ENCODE measurements at regions of chr12 and their contacts with region 1.

Region 1: DNA sequence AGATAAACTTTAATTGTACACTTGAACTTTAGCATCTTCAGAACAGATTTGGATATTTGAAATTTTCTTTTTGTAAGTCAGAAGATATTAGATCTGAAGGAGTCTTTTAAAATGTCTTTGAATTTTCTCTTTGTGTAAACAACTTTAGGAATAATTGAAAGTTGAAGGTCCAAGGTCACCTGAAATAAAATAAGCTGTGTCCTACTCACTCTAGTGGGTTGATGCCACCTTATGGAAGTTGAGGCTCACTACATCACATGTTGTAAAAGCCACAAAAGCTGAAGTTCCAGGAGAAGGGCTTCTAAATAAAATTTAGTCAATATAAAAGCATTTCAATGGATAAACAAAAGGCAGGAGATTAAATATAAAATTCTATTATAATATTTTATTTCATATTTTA is 122.0 kb upstream of the ATXN7L3B start:
- DNase-seq: peak; percentile 61
- ATAC-seq: no peak
- H3K4me3 ChIP-seq: no peak overlapping the region
- H3K27ac ChIP-seq: no peak overlapping the region
- H3K4me1 ChIP-seq: 0 out of 2 replicates have a peak, but pooled peaks cover 5% of the 10 kb centered on the region
- H3K27me3 ChIP-seq: no peaks in the 10 kb centered on the region
- CTCF ChIP-seq: peak; percentile 73

Region 2: GRCh38 chr12:74021937-74022336 is 393.7 kb before region 1 on chr12:
- CTCF ChIA-PET with region 1: no interaction called
- POLR2A ChIA-PET with region 1: no interaction called
- intact Hi-C with region 1: loop called (anchors 1 kb)
- DNase-seq: peak; percentile 84
- ATAC-seq: peak; percentile 100
- H3K4me3 ChIP-seq: no peak overlapping the region
- H3K27ac ChIP-seq: no peak overlapping the region
- H3K4me1 ChIP-seq: no peaks in the 10 kb centered on the region
- H3K27me3 ChIP-seq: no peaks in the 10 kb centered on the region
- CTCF ChIP-seq: peak; percentile 92

Region 3: DNA sequence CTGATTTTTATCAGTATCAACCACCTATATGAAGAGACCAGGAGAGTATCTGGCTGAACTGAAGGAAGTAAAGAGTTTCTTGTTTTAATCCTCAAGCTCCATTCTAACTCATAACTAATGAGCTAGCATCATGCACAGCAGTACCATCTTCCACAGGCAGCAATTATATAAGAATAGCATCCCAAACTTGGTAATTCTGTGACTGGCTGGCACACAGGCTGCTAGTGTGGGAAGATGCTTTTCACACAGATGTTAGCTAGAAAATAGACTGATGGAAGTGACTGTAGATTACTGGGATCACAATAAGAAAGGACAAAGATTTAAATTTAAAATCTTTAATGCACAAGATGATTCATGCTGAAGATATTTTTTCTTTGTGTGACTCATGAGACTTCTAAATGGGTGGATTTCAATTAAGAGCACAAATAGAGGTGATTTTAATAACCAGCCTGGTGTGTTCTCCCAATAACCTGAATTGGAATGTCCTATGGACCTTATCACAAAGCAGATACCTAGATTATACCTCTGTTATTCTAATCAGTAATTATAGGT is 295.7 kb before region 1 on chr12:
- CTCF ChIA-PET with region 1: no interaction called
- POLR2A ChIA-PET with region 1: no interaction called
- intact Hi-C with region 1: no loop called
- DNase-seq: peak; percentile 58
- ATAC-seq: peak; percentile 75
- H3K4me3 ChIP-seq: no peak overlapping the region
- H3K27ac ChIP-seq: no peak overlapping the region
- H3K4me1 ChIP-seq: peaks cover 11% of the 10 kb centered on the region; the same call in 1 of the 2 replicates
- H3K27me3 ChIP-seq: no peaks in the 10 kb centered on the region
- CTCF ChIP-seq: no peak

Region 4: DNA sequence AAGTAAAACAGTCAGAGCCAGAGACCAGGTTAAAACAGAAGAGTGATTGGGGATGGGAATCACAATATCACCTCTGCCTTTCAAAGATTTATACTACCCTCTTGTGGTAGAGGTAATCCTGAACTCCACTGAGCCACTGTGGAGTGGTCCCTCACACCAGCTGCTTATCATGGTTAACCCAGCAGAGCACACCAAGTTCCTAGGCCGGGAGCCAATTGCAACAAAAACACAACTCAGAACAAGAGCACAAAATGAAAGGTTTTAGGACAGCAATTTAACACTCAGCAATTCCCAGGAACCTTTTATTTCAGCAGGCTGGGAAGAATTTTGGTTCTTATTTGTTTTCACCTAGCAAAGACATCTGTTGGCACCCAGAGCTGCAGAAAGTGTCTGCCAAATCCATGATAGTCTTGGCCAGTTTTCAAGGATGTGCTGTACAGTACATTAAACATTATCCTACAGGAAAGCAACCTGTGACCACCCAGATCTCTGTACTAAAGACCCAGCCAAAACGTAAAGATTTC is 98.5 kb before region 1 on chr12:
- CTCF ChIA-PET with region 1: interaction called, 4 read pairs
- POLR2A ChIA-PET with region 1: no interaction called
- intact Hi-C with region 1: loop called (anchors 1 kb)
- DNase-seq: peak; percentile 72
- ATAC-seq: peak; percentile 98
- H3K4me3 ChIP-seq: no peak overlapping the region
- H3K27ac ChIP-seq: no peak overlapping the region
- H3K4me1 ChIP-seq: peaks cover 6% of the 10 kb centered on the region; the same call in 1 of the 2 replicates
- H3K27me3 ChIP-seq: no peaks in the 10 kb centered on the region
- CTCF ChIP-seq: peak; percentile 81

Region 5: GRCh38 chr12:74537707-74538385 is 122.2 kb after region 1 on chr12 and contains the start of gene ATXN7L3B:
- CTCF ChIA-PET with region 1: no interaction called
- POLR2A ChIA-PET with region 1: no interaction called
- intact Hi-C with region 1: loop called (anchors 1 kb)
- DNase-seq: peak; percentile 97
- ATAC-seq: peak; percentile 94
- H3K4me3 ChIP-seq: peak within 1 kb of the TSS; percentile 94
- H3K27ac ChIP-seq: peak within 1 kb of the TSS; percentile 85
- H3K4me1 ChIP-seq: peaks cover 29% of the 10 kb centered on the region
- H3K27me3 ChIP-seq: no peaks in the 10 kb centered on the region
- CTCF ChIP-seq: no peak
- total RNA-seq, gene ATXN7L3B: 23.7 and 25.5 TPM in 2 replicates

Measured in PC-3 (cell line).